Transverse colon (tissue), 4 donors: ENCODE measurements at regions of chr5 and their contacts with region 1.

Region 1: DNA sequence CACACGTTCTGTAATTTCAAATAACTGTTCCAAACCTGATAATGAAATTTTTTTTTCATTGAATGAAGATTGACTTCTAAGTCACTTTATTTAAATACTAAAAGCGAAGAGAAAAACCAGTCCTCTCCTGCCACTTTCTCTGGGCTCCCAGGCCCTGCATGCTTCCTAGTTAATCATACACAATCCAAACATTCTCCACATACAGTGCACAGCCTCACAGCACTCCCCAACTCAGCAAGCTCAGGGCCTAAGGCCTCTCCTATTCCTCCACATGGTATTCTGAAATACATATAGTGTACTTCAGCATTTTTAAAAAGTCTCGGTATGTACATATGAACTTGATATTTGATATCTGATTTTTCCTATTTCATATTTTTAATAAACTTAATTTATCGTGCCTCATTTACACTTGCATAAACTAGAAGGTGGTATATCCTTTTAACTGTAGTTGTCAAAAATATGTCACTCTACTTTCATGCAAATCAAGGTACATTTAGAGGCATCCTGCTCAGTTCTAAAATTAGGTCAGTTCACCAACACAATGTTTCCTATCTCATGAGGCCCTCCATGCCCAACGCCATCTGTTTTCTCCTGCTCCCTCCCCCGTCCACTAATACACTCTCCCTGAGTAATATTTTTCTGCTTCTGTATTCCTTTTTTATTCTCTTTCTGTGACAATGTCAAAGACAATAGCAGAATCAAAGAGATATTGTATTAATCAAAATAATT is 206.7 kb downstream of the ARRDC3 start:
- DNase-seq: no peak
- H3K4me3 ChIP-seq: no peak overlapping the region
- H3K27ac ChIP-seq: peak overlapping the region in 1 of 4 donors; percentile 25
- H3K4me1 ChIP-seq: peaks cover 0 to 4% (median 0%) of the 10 kb centered on the region in 4 donors
- H3K27me3 ChIP-seq: no peaks in the 10 kb centered on the region
- CTCF ChIP-seq: no peak
- EP300 ChIP-seq: no peak
- POLR2A ChIP-seq: no peak

Region 2: GRCh38 chr5:91119981-91120850 is 56.2 kb before region 1 on chr5:
- in situ Hi-C with region 1: no loop called
- intact Hi-C with region 1: loop called (anchors 5 kb)
- DNase-seq: no peak
- H3K4me3 ChIP-seq: no peak overlapping the region
- H3K27ac ChIP-seq: peak overlapping the region; percentile 35 to 59 (median 55)
- H3K4me1 ChIP-seq: peaks cover 0 to 37% (median 9%) of the 10 kb centered on the region in 4 donors
- H3K27me3 ChIP-seq: no peaks in the 10 kb centered on the region
- CTCF ChIP-seq: no peak
- EP300 ChIP-seq: no peak
- POLR2A ChIP-seq: no peak